SK-N-SH (cell line): ENCODE measurements at regions of chr16 and their contacts with region 1.

Region 1: GRCh38 chr16:67464565-67464964 is 16.4 kb downstream of the ATP6V0D1 start:
- DNase-seq: no peak
- H3K4me3 ChIP-seq: no peak overlapping the region
- H3K27ac ChIP-seq: no peak overlapping the region
- H3K4me1 ChIP-seq: peaks cover 13 to 29% of the 10 kb centered on the region in 2 experiments; a peak in 3 of 4 replicates
- H3K27me3 ChIP-seq: no peaks in the 10 kb centered on the region
- CTCF ChIP-seq: no peak
- EP300 ChIP-seq: no peak
- RAD21 ChIP-seq: no peak

Region 2: DNA sequence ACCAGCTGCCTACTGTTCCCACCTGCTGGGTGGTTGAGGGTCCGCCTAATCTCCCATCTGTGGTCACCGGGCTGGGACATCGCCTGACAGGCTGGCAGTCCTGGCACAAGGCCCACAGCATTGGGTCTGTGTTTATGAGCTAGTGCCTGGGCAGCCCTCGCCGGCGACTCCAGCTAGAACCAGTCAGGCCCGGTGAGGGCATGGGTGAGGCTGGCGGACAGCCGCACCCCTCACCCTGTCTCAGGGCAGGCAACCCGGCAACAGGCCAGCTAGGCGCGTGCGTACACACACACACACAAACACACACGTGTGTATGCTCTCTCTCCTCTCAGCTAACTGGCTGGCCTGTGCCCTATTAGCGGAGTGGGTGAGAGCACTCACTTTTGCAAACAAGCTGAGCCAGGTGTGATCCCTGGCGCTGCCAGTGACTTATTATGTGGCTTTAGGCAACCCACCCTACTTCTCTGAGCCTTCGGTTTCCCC is 23.3 kb before region 1 on chr16:
- CTCF ChIA-PET with region 1: interaction called, 35 read pairs
- POLR2A ChIA-PET with region 1: interaction called, 3 read pairs
- DNase-seq: peak; percentile 36
- H3K4me3 ChIP-seq: no peak overlapping the region
- H3K27ac ChIP-seq: no peak overlapping the region; a peak in 1 of 4 replicates
- H3K4me1 ChIP-seq: peaks cover 0 to 32% of the 10 kb centered on the region in 2 experiments; a peak in 1 of 4 replicates
- H3K27me3 ChIP-seq: no peaks in the 10 kb centered on the region
- CTCF ChIP-seq: no peak
- EP300 ChIP-seq: no peak
- RAD21 ChIP-seq: no peak

Region 3: GRCh38 chr16:67447508-67448076 is 17.0 kb before region 1 on chr16:
- CTCF ChIA-PET with region 1: interaction called, 35 read pairs
- POLR2A ChIA-PET with region 1: no interaction called
- DNase-seq: peak; percentile 70
- H3K4me3 ChIP-seq: no peak overlapping the region
- H3K27ac ChIP-seq: no peak overlapping the region
- H3K4me1 ChIP-seq: peaks cover 0 to 32% of the 10 kb centered on the region in 2 experiments; a peak in 1 of 4 replicates
- H3K27me3 ChIP-seq: no peaks in the 10 kb centered on the region
- CTCF ChIP-seq: peak; percentile 55
- EP300 ChIP-seq: no peak
- RAD21 ChIP-seq: peak; percentile 44; the same call in 1 of the 2 replicates

Region 4: GRCh38 chr16:67504041-67505021 is 39.8 kb after region 1 on chr16:
- CTCF ChIA-PET with region 1: no interaction called
- POLR2A ChIA-PET with region 1: no interaction called
- DNase-seq: no peak
- H3K4me3 ChIP-seq: no peak overlapping the region
- H3K27ac ChIP-seq: no peak overlapping the region
- H3K4me1 ChIP-seq: no peaks in the 10 kb centered on the region
- H3K27me3 ChIP-seq: no peaks in the 10 kb centered on the region
- CTCF ChIP-seq: no peak
- EP300 ChIP-seq: no peak
- RAD21 ChIP-seq: no peak